Common myeloid progenitor, CD34-positive (primary cell): ENCODE measurements at regions of chr5 and their contacts with region 1.

Region 1: DNA sequence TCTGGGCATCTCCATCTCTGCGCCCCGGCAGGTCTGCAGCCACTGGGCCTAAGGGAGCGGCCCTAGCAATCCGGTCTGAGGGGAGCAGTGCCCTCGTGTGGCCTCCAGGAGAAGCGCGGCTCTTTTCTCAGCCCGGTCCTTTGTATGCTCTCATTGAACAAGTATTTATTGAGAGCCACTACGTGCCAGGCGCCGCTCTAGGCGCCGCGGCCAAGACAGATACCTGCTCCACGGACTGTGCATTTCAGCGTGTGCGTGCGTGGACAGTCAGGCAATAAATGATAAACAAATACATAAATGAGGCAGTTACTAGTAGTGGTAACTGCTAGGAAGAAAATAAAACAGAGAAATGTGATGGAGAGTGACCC is 2.3 kb upstream of the SLC4A9 start:
- DNase-seq: peak; percentile 77 to 86 (median 83)
- H3K4me3 ChIP-seq: peak overlapping the region in 2 of 7 experiments; percentile 37 to 45
- H3K27ac ChIP-seq: no peak overlapping the region
- H3K4me1 ChIP-seq: peaks cover 0 to 6% (median 3%) of the 10 kb centered on the region in 4 experiments
- H3K27me3 ChIP-seq: peaks cover 0 to 3% (median 0%) of the 10 kb centered on the region in 5 experiments

Region 2: DNA sequence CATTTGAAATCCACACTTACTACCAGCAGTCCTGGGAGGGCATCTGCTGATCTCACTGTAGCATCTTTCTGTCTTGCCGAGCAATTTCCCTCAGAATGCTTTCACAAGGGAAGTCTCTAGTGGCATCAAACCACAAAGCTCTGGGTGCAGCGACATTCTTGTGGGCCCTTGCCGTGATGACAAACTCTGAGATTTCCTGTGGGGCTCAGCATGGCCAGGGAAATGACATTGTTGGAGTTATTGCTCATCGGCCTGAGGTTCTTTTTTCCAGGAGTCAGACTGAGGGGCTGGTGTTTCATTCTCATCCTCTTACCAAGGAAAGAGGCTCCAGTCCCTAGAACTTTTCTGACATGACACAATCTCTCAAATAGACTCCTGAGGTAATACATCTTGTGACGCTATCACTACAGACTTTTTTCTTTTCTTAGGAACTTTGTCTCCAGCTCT is 106.2 kb before region 1 on chr5:
- CTCF ChIA-PET with region 1: interaction called, 552 read pairs
- POLR2A ChIA-PET with region 1: no interaction called
- DNase-seq: peak; percentile 77 to 91 (median 89)
- H3K4me3 ChIP-seq: no peak overlapping the region
- H3K27ac ChIP-seq: no peak overlapping the region
- H3K4me1 ChIP-seq: peaks cover 4 to 29% (median 14%) of the 10 kb centered on the region in 4 experiments
- H3K27me3 ChIP-seq: no peaks in the 10 kb centered on the region

Region 3: GRCh38 chr5:140346348-140347101 is 11.2 kb before region 1 on chr5 and contains the start of gene HBEGF:
- CTCF ChIA-PET with region 1: interaction called, 204 read pairs
- POLR2A ChIA-PET with region 1: no interaction called
- DNase-seq: peak; percentile 50 to 59 (median 52)
- H3K4me3 ChIP-seq: peak within 1 kb of the TSS; percentile 44 to 80 (median 66)
- H3K27ac ChIP-seq: no peak within 1 kb of the TSS
- H3K4me1 ChIP-seq: peaks cover 21 to 61% (median 36%) of the 10 kb centered on the region in 4 experiments
- H3K27me3 ChIP-seq: peaks cover 0 to 13% (median 6%) of the 10 kb centered on the region in 5 experiments